ENCODE measurements at regions of chr2 and their contacts with region 1.

Region 1: GRCh38 chr2:88059979-88060906 is 4.7 kb upstream of the KRCC1 start:
- DNase-seq: peak; percentile 44
- H3K4me3 Mint-ChIP-seq: no peak overlapping the region
- H3K27ac Mint-ChIP-seq: no peak overlapping the region
- H3K4me1 Mint-ChIP-seq: peaks cover 36% of the 10 kb centered on the region
- H3K27me3 Mint-ChIP-seq: no peaks in the 10 kb centered on the region

Region 2: GRCh38 chr2:88090446-88091283 is 30.4 kb after region 1 on chr2:
- CTCF ChIA-PET with region 1: interaction called, 10 read pairs
- DNase-seq: no peak
- H3K4me3 Mint-ChIP-seq: no peak overlapping the region
- H3K27ac Mint-ChIP-seq: no peak overlapping the region
- H3K4me1 Mint-ChIP-seq: peaks cover 3% of the 10 kb centered on the region
- H3K27me3 Mint-ChIP-seq: no peaks in the 10 kb centered on the region

Region 3: DNA sequence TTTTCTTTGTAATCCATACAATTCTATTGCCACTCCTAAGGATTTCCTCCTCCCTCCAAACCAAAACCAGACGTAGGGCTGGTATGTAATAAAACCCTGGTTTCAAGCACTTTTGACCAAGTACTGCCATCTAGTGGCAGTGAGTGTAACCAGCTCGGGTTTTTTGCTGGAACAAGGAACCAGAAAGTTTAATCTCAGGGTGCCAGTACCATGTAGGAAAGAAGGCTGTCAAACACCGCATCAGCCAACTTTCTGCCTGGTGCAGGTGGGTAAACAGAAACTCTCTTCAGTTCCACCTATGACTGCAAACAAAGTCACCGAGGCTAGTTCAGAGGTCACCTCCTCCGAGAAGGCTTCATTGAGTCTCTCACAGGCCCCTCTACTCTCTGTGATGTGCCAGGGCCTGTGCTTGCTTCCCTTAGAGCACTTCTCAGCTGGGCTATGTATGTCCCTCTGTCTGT is 99.7 kb after region 1 on chr2:
- CTCF ChIA-PET with region 1: interaction called, 94 read pairs
- DNase-seq: peak; percentile 62
- H3K4me3 Mint-ChIP-seq: no peak overlapping the region
- H3K27ac Mint-ChIP-seq: no peak overlapping the region
- H3K4me1 Mint-ChIP-seq: no peaks in the 10 kb centered on the region
- H3K27me3 Mint-ChIP-seq: no peaks in the 10 kb centered on the region

Region 4: GRCh38 chr2:88187038-88187676 is 126.9 kb after region 1 on chr2:
- CTCF ChIA-PET with region 1: interaction called, 29 read pairs
- DNase-seq: peak; percentile 62
- H3K4me3 Mint-ChIP-seq: no peak overlapping the region
- H3K27ac Mint-ChIP-seq: no peak overlapping the region
- H3K4me1 Mint-ChIP-seq: peaks cover 19% of the 10 kb centered on the region
- H3K27me3 Mint-ChIP-seq: peaks cover 4% of the 10 kb centered on the region